ENCODE measurements at regions of chr11 and their contacts with region 1.

Region 1: DNA sequence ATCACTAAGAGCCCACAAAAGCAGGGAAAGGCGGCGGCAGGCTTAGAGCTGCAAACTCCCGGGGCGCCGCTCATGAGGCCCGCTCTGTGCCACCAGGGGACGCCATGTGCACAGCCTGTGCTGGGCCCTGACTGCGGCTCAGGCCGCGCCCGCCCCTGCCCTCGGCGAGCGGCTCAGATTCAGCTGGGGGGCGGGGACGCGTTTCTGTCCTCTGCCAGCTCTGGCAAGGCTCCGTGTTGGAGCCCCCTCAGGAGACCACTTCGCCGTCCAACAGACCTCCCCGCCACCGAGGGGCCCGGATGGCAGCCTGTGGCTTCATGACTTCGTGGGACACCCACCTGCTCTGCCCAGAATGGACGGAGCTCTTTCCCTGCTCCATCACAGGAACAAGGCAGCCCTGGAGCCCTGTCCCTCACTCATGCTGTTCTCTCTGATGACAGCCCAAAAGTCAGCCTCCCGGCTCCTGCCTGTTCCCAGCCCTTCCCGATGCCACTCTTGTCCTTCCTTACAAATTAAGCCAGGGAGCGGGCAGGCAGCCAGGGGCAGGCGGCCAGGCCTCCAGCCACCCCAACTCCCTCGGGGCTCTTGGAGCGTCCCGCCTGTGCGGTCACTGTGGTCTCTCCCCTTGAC is 69.1 kb downstream of the NAT10 start:
- DNase-seq: peak; percentile 70 to 98 (median 87)

Region 2: DNA sequence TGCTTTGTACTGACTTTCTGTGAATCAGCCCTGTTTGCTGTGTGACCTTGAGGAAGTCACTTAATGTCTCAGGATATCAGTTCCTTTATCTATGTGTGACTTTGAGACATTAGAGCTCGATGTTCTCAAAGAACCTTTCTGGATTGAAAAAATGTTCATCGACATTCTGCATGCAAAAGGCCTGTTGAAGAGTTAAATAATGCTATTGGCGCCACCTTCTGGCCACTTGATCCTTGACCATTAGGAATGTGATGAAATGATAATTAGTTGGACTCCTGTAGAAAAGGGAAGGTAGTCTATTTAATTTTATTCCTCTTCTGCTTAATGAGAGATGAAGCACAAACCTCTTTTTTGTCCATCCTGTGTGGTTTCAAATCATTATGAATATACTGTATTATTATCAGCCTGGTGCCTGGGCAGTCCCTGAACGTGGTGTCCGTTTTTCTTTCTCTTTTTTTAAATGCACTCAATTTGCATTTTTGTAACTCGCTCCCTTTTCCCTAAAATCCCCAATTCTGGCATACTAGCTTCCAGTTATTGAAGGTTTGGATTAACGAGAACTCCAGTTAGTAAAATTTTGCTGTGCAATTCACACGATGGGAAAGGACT is 318.4 kb after region 1 on chr11:
- intact Hi-C with region 1: loop called (anchors 10 kb)
- DNase-seq: peak in 6 of 10 donors; percentile 46 to 78 (median 62)